AG04449 (cell line): ENCODE measurements at regions of chr2 and their contacts with region 1.

Region 1: DNA sequence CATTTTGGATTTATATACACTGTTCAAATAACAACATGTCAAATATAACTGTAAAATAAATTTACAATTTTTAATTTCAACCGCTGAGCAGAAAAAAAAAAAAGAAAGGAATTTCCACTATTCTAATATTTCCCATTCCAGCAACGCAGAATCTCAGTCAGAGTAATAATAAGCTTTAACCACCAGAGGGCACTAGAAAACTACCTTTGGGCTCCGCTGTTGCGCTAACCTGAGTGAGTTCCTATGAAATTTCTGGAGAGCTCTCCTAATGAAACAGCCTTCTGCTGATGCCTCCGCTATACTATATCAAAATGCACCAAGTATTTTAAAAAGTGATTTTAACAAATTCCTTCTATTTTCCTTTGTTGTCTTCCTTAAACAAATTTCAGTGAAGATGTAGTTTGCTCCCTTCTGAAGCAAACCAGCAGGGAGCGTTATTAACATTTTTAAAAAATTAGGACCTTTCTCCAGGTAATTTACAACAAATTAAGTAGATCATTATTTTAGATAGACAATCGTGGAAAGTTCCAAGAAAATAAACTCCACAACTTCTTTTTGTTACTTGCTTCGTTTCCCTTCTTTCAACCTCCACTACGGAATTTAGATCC is 23.0 kb downstream of the ERMN start:
- DNase-seq: no peak
- H3K4me3 ChIP-seq: no peak overlapping the region
- CTCF ChIP-seq: peak; percentile 60

Region 2: DNA sequence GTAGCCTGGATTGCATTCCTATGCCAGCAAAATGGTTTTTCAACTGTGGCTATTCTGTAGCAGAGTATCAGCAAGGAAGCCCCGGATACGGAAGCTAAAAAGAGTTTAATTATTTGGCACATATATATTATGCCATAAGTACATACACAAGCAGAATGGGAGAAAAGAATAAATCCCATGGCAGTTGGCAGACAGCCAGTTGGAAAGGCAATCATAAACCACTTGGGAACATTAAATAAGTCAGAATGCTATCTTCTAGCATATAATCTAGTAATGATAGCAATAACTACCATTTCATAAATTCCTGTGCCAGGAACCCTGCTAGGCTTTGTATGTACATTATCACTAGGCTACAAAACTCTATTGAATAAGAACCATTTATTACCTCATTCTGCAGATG is 19.1 kb before region 1 on chr2:
- CTCF ChIA-PET with region 1: interaction called, 70 read pairs
- POLR2A ChIA-PET with region 1: interaction called, 3 read pairs
- DNase-seq: no peak
- H3K4me3 ChIP-seq: no peak overlapping the region
- CTCF ChIP-seq: no peak

Region 3: GRCh38 chr2:157312866-157313486 is 10.4 kb after region 1 on chr2:
- CTCF ChIA-PET with region 1: interaction called, 370 read pairs
- POLR2A ChIA-PET with region 1: no interaction called
- DNase-seq: no peak
- H3K4me3 ChIP-seq: no peak overlapping the region
- CTCF ChIP-seq: no peak

Region 4: GRCh38 chr2:157404363-157404762 is 101.8 kb after region 1 on chr2:
- CTCF ChIA-PET with region 1: no interaction called
- POLR2A ChIA-PET with region 1: no interaction called
- DNase-seq: no peak
- H3K4me3 ChIP-seq: no peak overlapping the region
- CTCF ChIP-seq: no peak

Region 5: GRCh38 chr2:157596992-157597681 is 294.5 kb after region 1 on chr2:
- CTCF ChIA-PET with region 1: interaction called, 104 read pairs
- POLR2A ChIA-PET with region 1: no interaction called
- DNase-seq: no peak
- H3K4me3 ChIP-seq: peak overlapping the region; percentile 26
- CTCF ChIP-seq: peak; percentile 66